ENCODE measurements at regions of chr21 and their contacts with region 1.

Region 1: GRCh38 chr21:36060159-36060921 is at the start of gene SETD4:
- DNase-seq: peak; percentile 91
- H3K4me3 Mint-ChIP-seq: peak within 1 kb of the TSS; percentile 82
- H3K27ac Mint-ChIP-seq: peak within 1 kb of the TSS; percentile 90
- H3K4me1 Mint-ChIP-seq: peaks cover 16% of the 10 kb centered on the region
- H3K27me3 Mint-ChIP-seq: no peaks in the 10 kb centered on the region
- total RNA-seq, gene SETD4: 14.8 to 15.2 TPM

Region 2: GRCh38 chr21:35953615-35954014 is 106.7 kb before region 1 on chr21:
- CTCF ChIA-PET with region 1: no interaction called
- intact Hi-C with region 1: no loop called
- DNase-seq: no peak
- H3K4me3 Mint-ChIP-seq: no peak overlapping the region
- H3K27ac Mint-ChIP-seq: no peak overlapping the region
- H3K4me1 Mint-ChIP-seq: no peaks in the 10 kb centered on the region
- H3K27me3 Mint-ChIP-seq: peaks cover 7% of the 10 kb centered on the region

Region 3: GRCh38 chr21:36005018-36005417 is 55.3 kb before region 1 on chr21:
- CTCF ChIA-PET with region 1: no interaction called
- intact Hi-C with region 1: no loop called
- DNase-seq: no peak
- H3K4me3 Mint-ChIP-seq: no peak overlapping the region
- H3K27ac Mint-ChIP-seq: no peak overlapping the region
- H3K4me1 Mint-ChIP-seq: no peaks in the 10 kb centered on the region
- H3K27me3 Mint-ChIP-seq: peaks cover 6% of the 10 kb centered on the region

Region 4: DNA sequence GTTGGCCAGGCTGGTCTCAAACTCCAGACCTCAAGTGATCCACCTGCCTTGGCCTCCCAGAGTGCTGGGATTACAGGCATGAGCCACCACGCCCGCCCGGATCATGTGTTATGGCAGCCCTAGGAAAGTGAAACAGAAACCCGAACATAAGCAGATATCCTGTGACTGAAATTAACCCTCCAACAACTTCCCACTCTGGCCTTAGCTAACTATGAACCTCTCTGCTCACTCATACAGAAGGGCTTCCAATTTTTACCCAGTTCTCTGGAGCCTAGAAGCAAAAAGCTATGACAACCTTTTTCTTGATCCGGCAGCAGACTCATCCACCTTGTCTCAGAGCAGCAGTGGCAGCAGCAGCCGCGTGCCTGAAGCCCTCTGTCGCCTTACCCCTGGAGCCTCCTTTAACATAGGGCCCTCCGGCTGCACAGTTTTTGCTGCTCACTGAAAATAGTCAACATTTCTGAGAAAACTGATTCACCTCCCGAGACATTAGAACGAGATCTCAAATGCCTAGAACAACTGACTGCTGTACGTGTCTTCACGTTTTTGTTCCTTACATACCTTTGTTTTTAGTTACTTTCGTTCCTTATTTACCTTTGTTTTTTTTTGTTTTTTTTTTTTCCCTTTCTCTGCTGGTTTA is 18.8 kb after region 1 on chr21:
- CTCF ChIA-PET with region 1: no interaction called
- intact Hi-C with region 1: loop called (anchors 1 kb)
- DNase-seq: peak; percentile 69
- H3K4me3 Mint-ChIP-seq: peak overlapping the region; percentile 51
- H3K27ac Mint-ChIP-seq: peak overlapping the region; percentile 82
- H3K4me1 Mint-ChIP-seq: peaks cover 33% of the 10 kb centered on the region
- H3K27me3 Mint-ChIP-seq: no peaks in the 10 kb centered on the region

Region 5: DNA sequence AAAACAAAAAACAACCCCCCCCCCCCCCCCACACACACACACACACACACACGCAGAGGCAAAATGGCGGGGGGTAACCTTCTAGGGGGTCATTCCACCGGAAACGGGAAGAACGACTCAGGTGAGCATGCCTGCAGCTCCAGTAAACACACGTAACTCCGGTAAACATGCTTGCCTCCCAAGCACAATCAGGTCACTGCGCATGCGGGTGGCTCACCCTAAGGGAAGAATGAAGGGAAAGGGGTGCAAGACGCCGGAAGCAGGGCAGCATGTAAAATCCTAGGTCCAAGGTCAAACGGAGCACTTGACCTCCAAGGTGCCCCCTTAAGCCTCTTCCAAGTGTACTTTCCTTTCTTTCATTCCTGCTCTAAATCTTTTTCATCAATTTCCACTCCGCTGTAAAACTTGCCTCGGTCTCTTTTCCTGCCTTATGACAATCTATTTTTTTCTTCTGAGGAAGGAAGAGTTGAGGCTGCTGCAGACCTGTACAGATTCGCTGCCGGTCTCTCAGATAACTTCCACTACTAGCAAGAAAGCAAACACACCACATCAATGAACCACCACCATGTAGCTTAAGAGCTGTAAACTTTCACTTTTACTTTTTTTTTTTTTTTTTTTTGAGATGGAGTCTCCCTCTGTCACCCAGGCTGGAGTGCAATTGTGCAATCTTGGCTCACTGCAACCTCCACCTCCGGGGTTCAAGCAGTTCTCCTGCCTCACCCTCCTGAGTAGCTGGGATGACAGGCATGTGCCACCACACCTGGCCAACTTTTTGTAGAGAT is 53.5 kb after region 1 on chr21:
- CTCF ChIA-PET with region 1: interaction called, 14 read pairs
- intact Hi-C with region 1: loop called (anchors 1 kb)
- DNase-seq: peak; percentile 33
- H3K4me3 Mint-ChIP-seq: peak overlapping the region; percentile 76
- H3K27ac Mint-ChIP-seq: peak overlapping the region; percentile 51
- H3K4me1 Mint-ChIP-seq: peaks cover 21% of the 10 kb centered on the region
- H3K27me3 Mint-ChIP-seq: no peaks in the 10 kb centered on the region

Region 6: DNA sequence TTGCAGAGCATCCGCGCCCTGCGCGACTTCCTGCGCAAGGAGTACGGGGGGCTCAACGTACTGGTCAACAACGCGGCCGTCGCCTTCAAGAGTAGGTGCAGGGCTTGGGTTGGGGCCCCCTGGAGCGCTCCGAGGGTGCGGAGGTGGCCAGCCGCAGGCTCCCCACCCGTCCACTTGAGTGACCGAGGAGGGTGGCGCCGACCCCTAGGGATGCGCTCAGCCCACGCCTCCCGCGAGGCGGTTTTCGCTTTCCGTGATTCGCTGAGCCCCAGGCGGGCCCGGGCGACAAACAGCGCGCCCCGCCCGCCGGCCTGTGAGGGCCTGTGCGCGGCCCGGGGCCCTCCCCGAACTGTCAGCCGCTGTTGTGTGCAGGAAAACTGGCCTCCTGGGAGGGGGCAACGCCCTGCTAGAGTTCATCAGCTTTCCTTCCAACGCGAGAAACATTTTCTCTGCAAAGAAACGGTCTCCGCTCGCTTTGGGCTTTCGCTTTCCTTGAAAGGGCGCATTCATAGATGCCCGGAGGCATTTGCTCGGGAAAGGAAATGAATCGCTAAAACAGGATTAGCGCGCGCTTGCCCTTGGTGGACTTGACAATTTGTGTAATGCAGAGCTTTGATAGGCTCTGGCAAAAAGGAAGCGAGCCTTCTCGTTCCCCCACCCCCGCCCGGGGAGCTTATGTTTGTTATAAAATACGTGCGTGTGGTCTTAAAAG is 75.2 kb after region 1 on chr21:
- CTCF ChIA-PET with region 1: no interaction called
- intact Hi-C with region 1: loop called (anchors 2 kb)
- DNase-seq: peak; percentile 79
- H3K4me3 Mint-ChIP-seq: peak overlapping the region; percentile 91
- H3K27ac Mint-ChIP-seq: peak overlapping the region; percentile 79
- H3K4me1 Mint-ChIP-seq: peaks cover 17% of the 10 kb centered on the region
- H3K27me3 Mint-ChIP-seq: no peaks in the 10 kb centered on the region